MCF 10A (cell line): ENCODE measurements at regions of chr11 and their contacts with region 1.

Region 1: GRCh38 chr11:68354148-68354872 is 41.9 kb downstream of the LRP5 start:
- DNase-seq: peak; percentile 97
- H3K4me3 Mint-ChIP-seq: peak overlapping the region; percentile 53
- H3K27ac Mint-ChIP-seq: peak overlapping the region; percentile 75
- H3K4me1 Mint-ChIP-seq: peaks cover 20% of the 10 kb centered on the region
- H3K27me3 Mint-ChIP-seq: no peaks in the 10 kb centered on the region
- CTCF ChIP-seq: no peak

Region 2: GRCh38 chr11:68312117-68312779 is 42.1 kb before region 1 on chr11 and contains the start of gene LRP5:
- CTCF ChIA-PET with region 1: no interaction called
- POLR2A ChIA-PET with region 1: interaction called, 12 read pairs
- intact Hi-C with region 1: loop called (anchors 1 kb)
- DNase-seq: no peak
- H3K4me3 Mint-ChIP-seq: peak within 1 kb of the TSS; percentile 87
- H3K27ac Mint-ChIP-seq: peak within 1 kb of the TSS; percentile 88
- H3K4me1 Mint-ChIP-seq: peaks cover 40% of the 10 kb centered on the region
- H3K27me3 Mint-ChIP-seq: no peaks in the 10 kb centered on the region
- CTCF ChIP-seq: no peak
- total RNA-seq, gene LRP5: 31.6 and 32.8 TPM in 2 replicates

Region 3: GRCh38 chr11:68828155-68828931 is 474.0 kb after region 1 on chr11:
- CTCF ChIA-PET with region 1: no interaction called
- POLR2A ChIA-PET with region 1: no interaction called
- intact Hi-C with region 1: no loop called
- DNase-seq: no peak
- H3K4me3 Mint-ChIP-seq: no peak overlapping the region
- H3K27ac Mint-ChIP-seq: no peak overlapping the region
- H3K4me1 Mint-ChIP-seq: no peaks in the 10 kb centered on the region
- H3K27me3 Mint-ChIP-seq: no peaks in the 10 kb centered on the region
- CTCF ChIP-seq: no peak